A673 (cell line): ENCODE measurements at regions of chr12 and their contacts with region 1.

Region 1: DNA sequence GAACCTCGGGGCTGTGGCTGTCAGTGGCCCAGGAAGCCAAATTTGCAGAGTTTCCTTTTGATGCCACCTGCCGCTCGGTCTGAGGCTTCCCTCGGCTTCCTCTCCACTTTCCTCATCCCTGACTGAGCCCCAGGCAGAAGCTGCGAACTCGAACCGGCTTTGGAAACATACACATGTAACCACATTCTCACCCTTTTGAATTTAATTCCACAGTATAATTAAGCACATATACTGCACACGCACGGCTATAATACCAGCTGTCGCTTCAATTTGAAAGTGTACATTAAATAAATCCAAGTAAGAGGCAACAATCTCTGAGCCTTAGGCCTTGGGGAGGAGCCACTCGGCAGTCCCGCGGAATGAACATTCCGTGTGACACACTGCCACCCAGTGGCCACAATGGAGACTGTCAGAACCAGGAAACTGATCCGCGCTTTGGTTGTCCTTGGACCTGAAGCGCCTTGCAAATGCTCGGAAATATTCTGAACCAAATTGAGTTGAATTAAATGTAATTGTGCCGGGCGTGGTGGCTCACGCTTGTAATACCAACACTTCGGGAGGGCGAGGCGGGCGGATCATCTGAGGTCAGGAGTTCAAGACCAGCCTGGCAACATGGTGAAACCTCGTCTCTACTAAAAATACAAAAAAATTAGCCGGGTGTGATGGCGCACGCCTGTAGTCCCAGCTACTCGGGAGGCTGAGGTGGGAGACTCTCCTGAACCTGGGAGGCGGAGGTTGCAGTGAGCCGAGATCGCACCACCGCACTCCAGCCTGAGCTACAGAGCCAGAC is 117.9 kb upstream of the TMPO start:
- DNase-seq: peak; percentile 89
- H3K4me3 ChIP-seq: no peak overlapping the region
- H3K27ac ChIP-seq: no peak overlapping the region
- H3K4me1 ChIP-seq: peaks cover 32% of the 10 kb centered on the region
- H3K27me3 ChIP-seq: no peaks in the 10 kb centered on the region
- CTCF ChIP-seq: peak; percentile 92

Region 2: DNA sequence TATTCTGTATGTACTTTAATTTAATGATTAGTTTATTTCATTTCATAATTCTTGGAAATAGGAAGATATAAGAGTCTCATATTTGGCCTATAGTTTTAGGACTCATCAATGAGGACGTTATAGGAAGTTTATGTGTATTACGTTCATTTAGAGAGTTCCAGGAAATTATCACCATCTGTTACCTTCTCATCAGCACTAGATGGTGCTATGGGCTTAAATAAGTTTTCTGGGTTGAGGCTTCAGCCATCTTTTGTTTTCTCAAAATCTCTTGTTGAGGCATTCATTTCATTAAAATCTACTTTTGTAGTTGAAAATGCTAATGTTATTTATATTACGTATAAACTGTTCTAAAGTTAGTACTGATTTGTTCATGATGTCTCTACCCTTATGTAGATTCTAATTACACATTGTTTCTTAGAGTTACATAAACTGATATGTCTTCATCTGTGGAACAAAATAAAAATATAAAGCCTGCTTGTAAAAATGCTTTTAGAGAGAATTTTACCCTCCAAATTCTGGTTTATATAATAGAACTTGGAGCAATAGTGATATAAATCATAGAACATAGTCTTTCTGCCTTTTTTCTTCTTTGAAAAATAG is 1818.9 kb before region 1 on chr12:
- CTCF ChIA-PET with region 1: no interaction called
- POLR2A ChIA-PET with region 1: no interaction called
- intact Hi-C with region 1: loop called (anchors 5 kb)
- DNase-seq: peak; percentile 75
- H3K4me3 ChIP-seq: no peak overlapping the region
- H3K27ac ChIP-seq: no peak overlapping the region
- H3K4me1 ChIP-seq: no peaks in the 10 kb centered on the region
- H3K27me3 ChIP-seq: peaks cover 4% of the 10 kb centered on the region
- CTCF ChIP-seq: peak; percentile 72

Region 3: DNA sequence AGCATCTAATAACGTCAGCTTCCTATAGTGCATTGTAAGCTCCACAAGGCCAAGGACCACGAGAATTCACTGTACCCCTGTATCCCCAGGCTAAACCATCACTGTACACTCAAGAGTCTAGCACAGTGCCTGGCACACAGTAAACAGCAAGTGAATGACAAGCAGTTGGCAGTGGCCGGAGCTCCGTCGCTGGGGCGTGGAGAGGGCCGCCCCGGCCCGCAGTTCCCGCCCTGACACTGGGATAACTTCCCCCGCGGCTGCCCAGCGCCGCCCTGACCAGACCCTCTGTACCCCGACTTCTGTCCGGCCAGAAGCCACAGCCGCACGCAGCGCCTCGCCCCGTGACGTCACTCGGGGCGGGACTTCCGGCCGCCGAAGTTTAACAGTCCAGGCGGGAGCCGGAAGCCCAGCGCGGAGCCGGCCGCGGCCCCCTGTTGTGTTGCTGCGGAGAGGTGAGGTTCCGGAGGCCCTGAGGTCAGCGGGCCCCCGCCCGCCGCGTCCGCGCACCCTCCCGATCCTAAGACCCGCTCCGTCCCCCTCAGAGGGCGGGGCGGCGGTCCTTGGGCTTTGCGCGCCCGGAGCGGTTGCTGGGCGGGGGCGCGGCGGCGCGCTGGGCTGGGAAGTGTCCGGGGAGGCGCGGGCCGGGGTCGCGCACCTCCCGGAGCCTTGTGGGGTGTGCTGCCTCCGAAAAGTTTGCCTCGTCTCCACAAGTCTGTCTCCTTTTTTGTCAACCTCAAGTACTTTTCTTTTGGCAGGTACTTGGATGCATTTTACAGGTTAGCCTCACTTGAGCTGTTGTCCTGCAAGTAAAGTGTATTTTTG is 1490.5 kb before region 1 on chr12 and contains the start of gene NEDD1:
- CTCF ChIA-PET with region 1: no interaction called
- POLR2A ChIA-PET with region 1: no interaction called
- intact Hi-C with region 1: loop called (anchors 10 kb)
- DNase-seq: peak; percentile 80
- H3K4me3 ChIP-seq: peak within 1 kb of the TSS; percentile 82
- H3K27ac ChIP-seq: peak within 1 kb of the TSS; percentile 84
- H3K4me1 ChIP-seq: peaks cover 9% of the 10 kb centered on the region
- H3K27me3 ChIP-seq: peaks cover 5% of the 10 kb centered on the region
- CTCF ChIP-seq: no peak
- total RNA-seq, gene NEDD1: 38.2 and 42.7 TPM in 2 replicates

Region 4: GRCh38 chr12:97148941-97149559 is 1248.5 kb before region 1 on chr12:
- CTCF ChIA-PET with region 1: interaction called, 4 read pairs
- POLR2A ChIA-PET with region 1: no interaction called
- intact Hi-C with region 1: loop called (anchors 1 kb)
- DNase-seq: peak; percentile 64
- H3K4me3 ChIP-seq: no peak overlapping the region
- H3K27ac ChIP-seq: no peak overlapping the region
- H3K4me1 ChIP-seq: no peaks in the 10 kb centered on the region
- H3K27me3 ChIP-seq: peaks cover 75% of the 10 kb centered on the region
- CTCF ChIP-seq: peak; percentile 83

Region 5: GRCh38 chr12:100075598-100075997 is 1678.1 kb after region 1 on chr12:
- CTCF ChIA-PET with region 1: no interaction called
- POLR2A ChIA-PET with region 1: no interaction called
- intact Hi-C with region 1: no loop called
- DNase-seq: no peak
- H3K4me3 ChIP-seq: no peak overlapping the region
- H3K27ac ChIP-seq: no peak overlapping the region
- H3K4me1 ChIP-seq: no peaks in the 10 kb centered on the region
- H3K27me3 ChIP-seq: no peaks in the 10 kb centered on the region
- CTCF ChIP-seq: no peak